ENCODE measurements at regions of chr14 and their contacts with region 1.

Region 1: GRCh38 chr14:58865514-58866232 is 227.9 kb downstream of the DACT1 start:
- DNase-seq: peak in 31 of 42 donors; percentile 6 to 81 (median 27)

Region 2: DNA sequence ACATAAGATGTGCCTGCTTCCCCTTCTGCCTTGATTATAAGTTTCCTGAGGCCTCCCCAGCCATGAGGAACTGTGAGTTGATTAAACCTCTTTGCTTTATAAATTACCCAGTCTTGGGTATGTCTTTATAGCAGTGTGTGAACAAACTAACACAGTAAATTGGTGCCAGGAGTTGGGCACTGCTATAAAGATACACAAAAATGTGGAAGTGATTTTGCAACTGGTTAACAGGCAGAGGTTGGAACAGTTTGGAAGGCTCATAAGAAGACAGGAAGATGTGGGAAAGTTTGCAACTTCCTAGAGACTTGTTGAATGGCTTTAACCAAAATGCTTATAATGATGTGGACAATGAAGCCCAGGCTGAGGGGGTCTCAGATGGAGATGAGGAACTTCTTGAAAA is 36.2 kb after region 1 on chr14:
- intact Hi-C with region 1: loop called (anchors 2 kb)
- DNase-seq: no peak

Region 3: DNA sequence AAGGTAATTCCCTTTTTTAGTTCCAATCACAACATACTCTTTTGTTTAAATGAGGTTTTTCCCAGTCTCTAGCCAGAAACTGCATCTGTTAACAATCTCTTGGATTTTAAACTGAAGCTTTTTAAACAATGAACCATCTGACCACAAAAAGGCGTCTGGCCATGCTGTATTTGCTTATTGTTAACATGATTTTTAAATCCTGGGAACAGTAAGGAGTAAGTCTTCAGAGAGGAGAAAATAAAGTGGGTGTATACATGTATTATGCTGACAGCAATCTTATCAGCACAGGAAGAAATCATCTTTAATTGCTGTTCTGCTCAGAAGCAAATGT is 429.0 kb after region 1 on chr14:
- intact Hi-C with region 1: no loop called
- DNase-seq: no peak

Region 4: DNA sequence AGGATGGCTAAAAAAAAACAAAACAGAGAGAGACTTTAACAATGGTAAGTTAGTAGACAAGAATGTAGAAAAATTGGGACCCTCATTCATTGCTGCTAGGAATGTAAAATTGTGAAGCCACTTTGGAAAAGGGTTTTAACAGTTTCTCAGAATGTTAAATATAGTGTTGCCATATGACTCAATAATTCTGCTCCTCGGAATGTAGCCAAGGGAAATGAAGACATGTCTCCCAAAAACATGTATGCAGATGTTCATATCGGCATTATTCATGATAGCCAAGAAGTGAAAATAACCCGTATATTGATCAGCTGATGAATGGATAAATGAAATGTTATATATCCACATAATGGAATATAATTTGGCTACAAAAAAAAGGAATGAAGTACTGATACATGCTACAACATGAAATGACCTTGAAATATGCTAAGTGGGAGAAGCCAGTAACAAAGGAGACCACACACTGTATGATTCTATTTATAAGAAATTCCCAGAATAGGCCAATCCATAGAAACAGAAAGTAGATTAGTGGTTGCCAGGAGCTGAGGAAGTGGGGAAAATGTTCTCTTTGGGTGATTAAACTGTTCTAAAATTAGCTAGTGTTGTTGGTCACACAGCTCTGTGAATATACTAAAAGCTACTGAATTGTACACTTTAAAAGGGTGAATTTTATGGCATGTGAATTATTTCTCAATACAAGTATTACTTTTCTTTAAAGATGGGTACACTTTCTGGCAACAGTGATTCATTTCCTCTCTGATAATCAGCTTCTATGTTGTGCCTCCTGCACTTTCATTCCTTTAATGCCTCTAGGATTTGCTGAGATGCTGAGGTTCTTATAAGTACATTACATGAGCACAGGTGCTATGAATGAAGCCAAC is 455.3 kb after region 1 on chr14:
- intact Hi-C with region 1: no loop called
- DNase-seq: no peak